Left colon (tissue), 2 donors: ENCODE measurements at regions of chr2 and their contacts with region 1.

Region 1: GRCh38 chr2:180279581-180279980 is 272.5 kb upstream of the CWC22 start:
- DNase-seq: no peak
- ATAC-seq: no peak

Region 2: DNA sequence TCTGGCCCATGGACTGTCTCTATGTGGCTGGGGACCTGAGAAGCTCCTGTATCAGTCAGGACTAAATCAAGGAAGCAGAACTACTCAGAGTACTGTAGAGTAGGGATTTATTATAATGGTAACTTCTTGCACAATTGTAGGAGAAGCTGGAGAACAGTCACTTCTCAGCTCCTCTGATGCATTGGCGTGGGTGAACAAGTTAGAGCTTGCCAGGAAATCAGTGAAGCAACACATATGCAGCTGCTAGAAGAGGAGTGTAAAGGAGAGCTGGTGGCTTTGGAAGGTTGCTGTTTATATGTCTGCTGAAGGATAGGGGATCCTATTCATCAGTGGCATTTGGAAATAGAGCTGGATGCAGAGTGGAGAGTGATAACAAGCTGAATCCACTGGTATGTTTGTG is 56.9 kb before region 1 on chr2:
- intact Hi-C with region 1: loop called in 1 of 2 experiments (anchors 2 kb)
- DNase-seq: no peak
- ATAC-seq: no peak